ENCODE measurements at regions of chr18 and their contacts with region 1.

Region 1: DNA sequence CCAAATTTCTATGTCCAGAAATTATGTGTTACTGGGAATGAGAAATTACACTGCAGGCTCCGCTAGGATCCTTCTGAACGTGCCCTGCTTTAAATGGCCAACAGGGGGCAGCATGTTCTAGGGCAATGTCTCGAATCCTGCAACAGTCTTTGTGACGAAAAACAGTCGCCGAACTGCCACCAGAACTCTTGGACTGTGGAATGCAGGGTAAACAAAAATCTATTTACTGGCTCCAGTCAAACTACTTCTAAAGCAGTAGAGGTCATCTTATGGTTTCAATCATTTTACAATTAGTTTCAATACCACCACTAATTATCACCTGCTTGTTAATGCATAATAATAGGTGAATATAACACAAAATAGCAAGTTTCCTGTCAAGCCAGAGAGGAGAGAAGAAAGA is 9.8 kb upstream of the ZNF397 start:
- DNase-seq: peak; percentile 91

Region 2: DNA sequence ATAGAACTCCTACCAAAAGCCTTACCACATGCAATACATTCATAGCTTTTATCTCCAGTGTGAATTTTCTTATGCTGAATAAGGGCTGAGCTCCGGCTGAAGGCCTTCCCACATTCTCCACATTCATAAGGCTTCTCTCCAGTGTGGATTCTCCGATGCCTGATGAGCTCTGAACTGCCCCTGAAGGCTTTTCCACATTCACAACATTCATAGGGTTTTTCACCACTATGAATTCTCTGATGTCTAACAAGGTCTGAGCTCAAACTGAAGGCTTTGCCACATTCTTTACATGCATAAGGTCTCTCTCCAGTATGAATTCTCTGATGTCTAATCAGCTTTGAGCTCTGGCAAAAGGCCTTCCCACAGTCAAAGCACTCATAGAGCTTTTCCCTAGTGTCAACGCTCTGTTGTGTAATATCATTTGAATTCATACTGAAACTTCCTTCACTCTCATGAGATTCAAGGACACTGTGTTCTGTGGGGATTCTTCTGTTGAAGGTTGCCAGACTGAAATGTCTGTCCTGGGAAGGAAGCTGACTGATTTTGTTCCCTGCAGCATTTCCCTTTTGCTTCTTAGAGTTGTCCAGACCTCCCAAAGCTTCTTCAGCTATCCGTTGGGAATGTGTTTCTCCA is 22.7 kb after region 1 on chr18:
- CTCF ChIA-PET with region 1: no interaction called
- POLR2A ChIA-PET with region 1: no interaction called
- DNase-seq: no peak

Region 3: GRCh38 chr18:35355140-35355618 is 124.1 kb after region 1 on chr18:
- CTCF ChIA-PET with region 1: interaction called, 10 read pairs
- POLR2A ChIA-PET with region 1: no interaction called
- DNase-seq: peak; percentile 87

Region 4: DNA sequence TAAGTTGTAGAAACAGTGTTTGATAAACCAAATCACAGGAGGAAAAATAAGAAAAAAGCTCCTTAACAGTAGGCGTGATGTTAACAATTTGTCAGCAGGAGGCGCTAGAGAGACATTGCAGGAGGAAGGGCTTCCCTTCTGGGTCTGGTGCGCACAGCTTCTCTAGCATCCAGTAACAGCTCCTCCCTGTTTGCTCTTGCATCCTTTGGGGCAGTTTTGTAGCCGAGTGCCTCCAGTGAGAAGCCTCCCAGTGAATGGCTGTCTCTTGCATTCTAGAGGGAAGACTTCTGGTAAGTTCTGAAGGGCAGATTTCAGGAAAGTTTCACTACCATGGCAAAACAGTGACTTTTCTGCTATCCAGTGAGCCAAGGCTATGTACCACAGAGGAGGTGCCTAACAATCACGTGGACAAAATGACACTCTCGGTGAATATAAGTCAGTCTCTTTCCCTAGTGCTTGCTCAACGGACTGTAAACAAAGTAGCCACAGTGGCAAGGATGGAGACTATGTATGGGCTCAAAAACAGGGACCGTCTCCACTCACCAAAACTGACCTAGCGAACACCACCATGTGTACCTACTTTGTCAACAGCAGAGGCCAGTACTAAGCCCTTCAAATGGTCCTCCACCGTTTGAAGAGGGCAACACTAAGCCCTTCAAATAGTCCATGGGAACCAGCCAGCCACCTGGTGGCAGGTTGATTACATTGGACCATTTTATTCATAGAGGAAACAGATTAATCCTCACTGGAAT is 155.7 kb after region 1 on chr18:
- CTCF ChIA-PET with region 1: interaction called, 12 read pairs
- POLR2A ChIA-PET with region 1: no interaction called
- DNase-seq: peak; percentile 93

Region 5: DNA sequence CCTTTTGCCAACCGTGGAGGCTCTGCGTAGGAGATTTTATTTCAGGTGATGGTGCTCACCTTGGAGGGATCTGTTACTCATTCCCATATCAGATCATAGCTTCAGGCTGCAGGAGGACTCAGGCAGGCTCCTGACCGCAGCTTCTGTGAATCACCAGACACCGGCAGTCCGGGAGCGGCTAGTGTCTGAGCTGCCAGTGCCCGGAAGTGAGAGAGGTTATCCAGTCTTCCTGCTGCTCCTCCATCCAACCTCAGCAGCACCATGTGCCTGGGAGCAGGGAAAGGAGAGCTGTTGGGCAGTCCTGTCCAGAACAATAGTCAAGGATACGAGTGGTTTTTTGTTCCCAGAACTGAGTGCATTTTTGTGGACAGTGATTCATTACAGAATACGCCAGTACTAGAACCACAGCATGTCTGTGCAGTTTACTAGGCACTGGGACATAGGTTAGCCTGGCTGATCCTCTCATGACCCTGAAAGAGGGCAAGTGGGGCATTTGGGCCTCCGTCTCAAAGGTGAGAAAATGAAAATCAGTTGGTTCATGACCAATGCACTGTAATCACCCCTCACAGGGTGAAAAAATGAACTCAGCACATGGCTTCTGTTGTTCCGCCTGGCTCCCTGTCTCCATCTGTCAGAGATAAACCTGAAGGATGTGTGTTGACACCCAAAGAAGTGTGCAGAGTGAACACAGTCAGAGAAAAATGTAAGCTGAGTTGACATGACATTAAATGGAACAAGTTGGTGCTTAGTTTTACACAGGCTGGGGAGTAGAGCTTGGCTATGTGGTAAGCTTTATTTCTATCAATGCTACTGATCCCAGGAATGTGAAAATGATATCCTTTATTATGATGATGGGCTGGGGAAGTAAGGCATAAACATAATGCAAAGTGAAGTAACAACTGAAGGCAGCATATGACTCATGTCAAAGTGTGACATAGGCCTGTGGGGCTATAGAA is 1078.7 kb after region 1 on chr18:
- CTCF ChIA-PET with region 1: no interaction called
- POLR2A ChIA-PET with region 1: no interaction called
- DNase-seq: no peak